Activated T-helper 2 cell treated with anti-CD3 and anti-CD28 coated beads, Interferon-gamma antibody, Interleukin-2, Interleukin-4, amounts not matched to agents 10 μg/mL and 5 μg/mL and 100 μg/mL, durations not matched to agents 14 hours and 24 hours and 36 hours (primary cell): ENCODE measurements at regions of chr1 and their contacts with region 1.

Region 1: GRCh38 chr1:236370420-236370819 is 23.7 kb upstream of the EDARADD start:
- DNase-seq: no peak
- H3K4me3 Mint-ChIP-seq: no peak overlapping the region
- H3K27ac Mint-ChIP-seq: peak overlapping the region; percentile 67
- H3K4me1 Mint-ChIP-seq: peaks cover 13% of the 10 kb centered on the region
- H3K27me3 Mint-ChIP-seq: peaks cover 10% of the 10 kb centered on the region

Region 2: GRCh38 chr1:236120721-236121153 is 249.7 kb before region 1 on chr1:
- intact Hi-C with region 1: loop called (anchors 2 kb)
- DNase-seq: no peak
- H3K4me3 Mint-ChIP-seq: peak overlapping the region; percentile 45
- H3K27ac Mint-ChIP-seq: peak overlapping the region; percentile 29
- H3K4me1 Mint-ChIP-seq: peaks cover 29% of the 10 kb centered on the region
- H3K27me3 Mint-ChIP-seq: peaks cover 19% of the 10 kb centered on the region

Region 3: DNA sequence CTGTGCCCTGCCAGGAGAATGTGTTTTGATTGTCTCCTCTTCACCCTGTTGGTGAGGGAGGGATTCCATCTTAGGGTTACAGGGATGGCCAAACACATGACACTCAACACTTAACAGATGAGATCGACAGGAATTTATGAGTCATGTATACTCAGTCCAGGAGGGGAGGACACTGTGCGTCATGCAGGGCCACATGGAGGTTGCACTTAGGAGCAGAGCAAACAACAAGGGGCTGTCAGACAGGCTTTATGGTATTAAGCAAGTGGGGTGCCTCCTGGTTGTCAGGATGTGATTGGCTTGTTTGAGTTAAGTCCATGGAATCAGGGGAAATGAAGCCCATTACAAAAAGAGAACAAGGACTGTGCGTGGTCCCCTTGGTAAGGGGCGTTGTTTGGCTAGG is 50.6 kb after region 1 on chr1:
- intact Hi-C with region 1: loop called (anchors 2 kb)
- DNase-seq: no peak
- H3K4me3 Mint-ChIP-seq: no peak overlapping the region
- H3K27ac Mint-ChIP-seq: no peak overlapping the region
- H3K4me1 Mint-ChIP-seq: peaks cover 23% of the 10 kb centered on the region
- H3K27me3 Mint-ChIP-seq: no peaks in the 10 kb centered on the region

Region 4: DNA sequence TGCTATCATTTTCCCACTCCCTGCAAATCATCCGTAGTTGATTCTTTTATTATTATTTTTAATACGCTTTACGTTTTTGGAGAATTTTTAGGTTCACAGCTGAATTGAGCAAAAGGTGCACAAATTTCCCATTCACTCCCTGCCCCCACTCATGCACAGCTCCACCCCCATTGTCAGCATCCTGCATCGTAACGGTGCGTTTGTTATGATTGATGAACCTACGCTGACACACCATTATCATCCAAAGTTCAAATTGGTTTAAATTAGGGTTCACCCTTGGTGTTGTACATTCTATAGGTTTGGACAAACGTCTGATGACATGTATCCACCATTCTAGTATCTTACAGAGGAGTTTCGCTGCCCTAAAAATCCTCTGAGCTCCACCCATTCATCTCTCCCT is 68.2 kb after region 1 on chr1:
- intact Hi-C with region 1: no loop called
- DNase-seq: no peak
- H3K4me3 Mint-ChIP-seq: no peak overlapping the region
- H3K27ac Mint-ChIP-seq: no peak overlapping the region
- H3K4me1 Mint-ChIP-seq: peaks cover 5% of the 10 kb centered on the region
- H3K27me3 Mint-ChIP-seq: no peaks in the 10 kb centered on the region

Region 5: DNA sequence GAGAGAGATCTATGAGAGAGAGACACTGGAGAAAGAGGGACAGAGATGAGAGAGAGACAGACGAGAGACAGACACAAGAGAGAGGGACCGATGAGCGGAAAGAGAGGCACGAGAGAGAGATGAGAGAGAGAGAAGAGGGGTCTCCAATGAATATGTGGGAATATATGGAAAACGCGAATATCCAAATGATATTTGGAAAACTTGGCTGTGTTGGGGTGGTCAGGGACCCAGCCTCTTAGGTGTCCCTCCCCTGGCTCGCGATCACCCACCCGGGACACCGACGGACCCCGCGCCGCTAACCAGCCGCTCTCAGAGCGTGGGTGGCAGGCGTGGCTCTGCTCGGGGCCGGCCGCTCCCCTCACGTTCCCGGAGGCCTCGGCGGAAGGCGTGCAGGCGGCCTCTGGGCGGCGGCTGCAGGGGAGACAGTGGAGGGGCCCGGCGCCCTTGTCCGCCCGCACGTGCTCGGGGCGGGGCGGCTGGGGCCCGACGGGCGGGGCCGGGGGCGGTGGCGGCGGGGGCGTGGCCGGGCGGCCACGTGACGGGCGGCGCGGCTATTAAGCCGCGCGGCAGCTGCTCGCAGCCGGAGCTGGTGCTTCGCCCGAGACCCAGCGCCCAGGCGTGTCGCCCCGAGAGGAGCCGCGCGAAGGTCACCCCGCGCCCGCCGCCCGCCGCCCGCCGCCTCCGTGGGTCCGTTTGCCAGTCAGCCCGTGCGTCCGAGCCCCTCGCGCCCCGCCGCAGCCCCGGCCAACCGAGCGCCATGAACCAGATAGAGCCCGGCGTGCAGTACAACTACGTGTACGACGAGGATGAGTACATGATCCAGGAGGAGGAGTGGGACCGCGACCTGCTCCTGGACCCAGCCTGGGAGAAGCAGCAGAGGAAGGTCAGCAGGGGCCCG is 315.7 kb after region 1 on chr1 and contains the start of gene ACTN2:
- intact Hi-C with region 1: no loop called
- DNase-seq: peak; percentile 29
- H3K4me3 Mint-ChIP-seq: peak within 1 kb of the TSS; percentile 72
- H3K27ac Mint-ChIP-seq: no peak within 1 kb of the TSS
- H3K4me1 Mint-ChIP-seq: peaks cover 8% of the 10 kb centered on the region
- H3K27me3 Mint-ChIP-seq: peaks cover 56% of the 10 kb centered on the region
- total RNA-seq, gene ACTN2: 0.21 and 0.23 TPM in 2 replicates